AG04450 (cell line): ENCODE measurements at regions of chr11 and their contacts with region 1.

Region 1: GRCh38 chr11:67630228-67630942 is 648 bp upstream of the NUDT8 start:
- DNase-seq: peak; percentile 87
- H3K4me3 ChIP-seq: peak overlapping the region; percentile 79
- H3K27ac ChIP-seq: peak overlapping the region; percentile 39
- H3K27me3 ChIP-seq: peaks cover 5% of the 10 kb centered on the region
- CTCF ChIP-seq: peak; percentile 65

Region 2: DNA sequence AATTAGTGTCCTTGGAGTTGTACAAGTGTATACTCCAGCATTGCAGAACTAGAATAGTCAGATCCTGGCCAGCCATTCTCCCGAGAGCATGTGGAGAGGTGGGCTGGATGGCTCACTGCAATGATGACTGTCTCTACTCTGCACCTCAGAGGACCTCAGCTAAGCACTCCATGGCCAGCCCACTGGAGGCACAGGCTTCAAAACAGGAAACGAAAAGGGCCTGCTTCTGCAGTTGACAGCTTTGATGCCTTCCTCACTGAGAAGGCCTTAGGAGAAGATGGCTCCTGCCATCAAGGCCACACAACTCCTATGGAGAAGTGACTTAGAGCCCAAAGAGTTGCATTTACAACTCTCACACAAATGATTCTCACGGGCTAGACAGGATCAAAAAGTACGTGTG is 286.1 kb before region 1 on chr11:
- CTCF ChIA-PET with region 1: no interaction called
- POLR2A ChIA-PET with region 1: no interaction called
- DNase-seq: no peak
- H3K4me3 ChIP-seq: no peak overlapping the region
- H3K27ac ChIP-seq: no peak overlapping the region
- H3K27me3 ChIP-seq: no peaks in the 10 kb centered on the region
- CTCF ChIP-seq: no peak

Region 3: GRCh38 chr11:67606492-67607201 is 23.7 kb before region 1 on chr11 and contains the start of gene NDUFV1:
- CTCF ChIA-PET with region 1: interaction called, 23 read pairs
- POLR2A ChIA-PET with region 1: no interaction called
- DNase-seq: peak; percentile 65
- H3K4me3 ChIP-seq: peak within 1 kb of the TSS; percentile 70
- H3K27ac ChIP-seq: peak within 1 kb of the TSS; percentile 31
- H3K27me3 ChIP-seq: peaks cover 5% of the 10 kb centered on the region
- CTCF ChIP-seq: peak; percentile 44
- polyA plus RNA-seq, gene NDUFV1: 79.5 and 89.9 TPM in 2 replicates

Region 4: GRCh38 chr11:67613960-67614715 is 16.2 kb before region 1 on chr11:
- CTCF ChIA-PET with region 1: interaction called, 44 read pairs
- POLR2A ChIA-PET with region 1: interaction called, 5 read pairs
- DNase-seq: no peak
- H3K4me3 ChIP-seq: peak overlapping the region; percentile 20; the same call in 1 of the 2 replicates
- H3K27ac ChIP-seq: no peak overlapping the region
- H3K27me3 ChIP-seq: peaks cover 25% of the 10 kb centered on the region
- CTCF ChIP-seq: peak; percentile 67

Region 5: DNA sequence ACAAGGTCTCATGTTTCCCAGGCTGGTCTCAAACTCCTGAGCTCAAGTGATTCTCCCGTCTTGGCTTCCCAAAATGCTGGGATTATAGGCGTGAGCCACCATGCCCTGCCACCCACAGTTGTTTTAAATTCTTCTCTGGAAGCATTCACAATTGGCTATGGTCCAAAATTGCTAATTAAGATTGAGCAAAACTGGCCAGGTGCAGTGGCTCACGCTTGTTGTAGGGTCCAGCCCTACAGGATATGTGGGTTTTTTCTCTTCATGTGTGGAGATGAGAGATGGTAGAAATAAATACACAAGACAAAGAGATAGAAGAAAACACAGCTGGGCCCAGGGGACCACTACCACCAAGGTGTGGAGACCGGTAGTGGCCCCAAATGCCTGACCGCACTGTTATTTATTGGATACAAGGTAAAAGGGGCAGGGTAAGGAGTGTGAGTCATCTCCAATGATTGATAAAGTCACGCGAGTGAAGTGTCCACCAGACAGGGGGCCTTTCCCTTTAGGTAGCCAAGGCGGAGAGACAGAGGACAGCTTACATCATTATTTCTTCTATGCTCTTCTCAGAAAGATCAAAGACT is 28.4 kb after region 1 on chr11:
- CTCF ChIA-PET with region 1: interaction called, 14 read pairs
- POLR2A ChIA-PET with region 1: no interaction called
- DNase-seq: no peak
- H3K4me3 ChIP-seq: no peak overlapping the region
- H3K27ac ChIP-seq: no peak overlapping the region
- H3K27me3 ChIP-seq: peaks cover 12% of the 10 kb centered on the region
- CTCF ChIP-seq: no peak